IMR-90 (cell line): ENCODE measurements at regions of chrX and their contacts with region 1.

Region 1: DNA sequence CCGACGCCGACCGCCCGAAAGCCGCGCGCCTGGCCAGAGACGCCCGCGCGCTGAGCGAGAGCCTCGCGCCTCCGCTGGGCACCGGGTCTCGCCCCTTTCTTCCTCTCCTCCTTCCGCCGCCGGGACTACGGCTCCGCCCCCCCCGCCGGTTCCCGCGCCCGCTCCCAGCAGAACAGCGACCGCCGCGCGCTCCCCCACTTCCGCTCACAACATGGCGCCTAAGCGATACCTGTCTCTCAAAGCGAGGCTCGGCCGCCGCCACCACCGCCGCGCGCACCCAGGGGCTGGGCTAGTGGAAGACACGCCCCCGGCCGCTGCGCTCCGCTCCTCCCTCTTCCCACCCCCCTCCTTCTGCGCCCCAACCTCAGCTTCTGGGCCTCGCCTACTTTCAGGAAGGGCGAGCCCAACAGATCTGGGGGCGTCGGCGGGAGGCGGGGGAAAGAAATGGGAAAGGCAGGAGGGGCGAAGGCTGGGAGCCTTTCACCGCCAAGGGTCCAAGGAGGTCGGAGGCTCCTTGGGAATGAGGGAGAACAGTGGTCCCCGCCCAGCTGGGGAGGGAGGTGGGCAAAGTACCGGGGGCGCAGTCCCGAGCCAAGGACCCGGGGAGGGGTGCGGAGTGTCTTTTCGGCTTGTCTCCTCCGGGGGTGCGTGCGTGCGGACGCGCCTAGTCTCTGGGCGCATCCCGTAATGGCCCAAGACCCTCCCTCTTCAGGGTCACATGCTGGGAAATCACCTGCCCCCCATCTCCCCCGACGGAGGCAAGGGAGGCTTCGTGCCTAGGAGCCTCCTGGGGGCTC is at the start of gene RPS6KA3:
- DNase-seq: peak; percentile 79
- ATAC-seq: peak; percentile 90
- H3K4me3 ChIP-seq: peak within 1 kb of the TSS; percentile 95
- H3K27ac ChIP-seq: peak within 1 kb of the TSS; percentile 76
- H3K4me1 ChIP-seq: no peaks in the 10 kb centered on the region
- H3K27me3 ChIP-seq: no peaks in the 10 kb centered on the region
- CTCF ChIP-seq: no peak
- POLR2A ChIP-seq: peak; percentile 59
- RAD21 ChIP-seq: no peak
- total RNA-seq, gene RPS6KA3: 43.9 and 51.1 TPM in 2 replicates

Region 2: DNA sequence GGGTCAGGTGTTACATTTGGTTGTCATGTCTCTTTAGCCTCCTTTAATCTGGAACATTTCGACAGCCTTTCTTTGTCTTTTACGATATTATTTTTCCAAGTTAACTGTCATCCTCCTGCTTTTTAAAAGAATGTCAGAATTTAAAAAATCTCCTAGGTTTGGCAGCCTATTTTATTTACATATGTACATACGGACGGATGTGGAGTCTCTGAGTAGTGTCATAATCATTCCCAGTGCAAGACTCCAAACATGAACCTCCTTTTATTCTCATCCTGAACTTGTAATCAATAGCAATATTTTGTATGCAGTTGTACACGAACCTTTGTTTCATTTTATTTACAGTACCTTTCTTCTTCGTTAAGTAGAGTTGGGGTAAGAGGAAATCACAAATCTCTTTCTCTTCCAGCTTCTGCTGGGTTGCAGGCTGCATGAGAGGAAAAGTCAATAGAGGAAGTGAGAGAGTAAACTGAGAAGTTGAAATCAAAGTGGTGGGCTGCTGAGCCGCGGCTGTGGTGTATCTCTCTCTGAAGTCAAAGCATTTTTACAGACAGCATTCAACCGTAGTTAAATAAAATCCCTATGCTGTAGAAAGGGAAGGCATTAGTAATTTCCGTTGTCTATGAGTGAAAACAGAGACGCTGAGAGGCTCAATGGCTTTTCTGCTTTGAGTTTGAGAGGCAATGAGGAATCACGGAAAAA is 53.6 kb after region 1 on chrX:
- CTCF ChIA-PET with region 1: no interaction called
- POLR2A ChIA-PET with region 1: no interaction called
- dilution Hi-C with region 1: no loop called
- in situ Hi-C with region 1: no loop called
- intact Hi-C with region 1: no loop called
- DNase-seq: no peak
- ATAC-seq: 0 out of 2 replicates have a peak, but pooled peaks have one; percentile 32
- H3K4me3 ChIP-seq: peak overlapping the region; percentile 37; the same call in 1 of the 2 replicates
- H3K27ac ChIP-seq: peak overlapping the region; percentile 35; the same call in 1 of the 2 replicates
- H3K4me1 ChIP-seq: no peaks in the 10 kb centered on the region
- H3K27me3 ChIP-seq: peaks cover 11% of the 10 kb centered on the region
- CTCF ChIP-seq: no peak
- POLR2A ChIP-seq: no peak
- RAD21 ChIP-seq: no peak

Region 3: GRCh38 chrX:20361890-20362262 is 94.9 kb after region 1 on chrX:
- CTCF ChIA-PET with region 1: no interaction called
- POLR2A ChIA-PET with region 1: no interaction called
- dilution Hi-C with region 1: no loop called
- in situ Hi-C with region 1: no loop called
- intact Hi-C with region 1: loop called (anchors 1 kb)
- DNase-seq: peak; percentile 75
- ATAC-seq: peak; percentile 82
- H3K4me3 ChIP-seq: no peak overlapping the region
- H3K27ac ChIP-seq: peak overlapping the region; percentile 89; the same call in 1 of the 2 replicates
- H3K4me1 ChIP-seq: peaks cover 6% of the 10 kb centered on the region
- H3K27me3 ChIP-seq: no peaks in the 10 kb centered on the region
- CTCF ChIP-seq: no peak
- POLR2A ChIP-seq: no peak
- RAD21 ChIP-seq: no peak

Region 4: DNA sequence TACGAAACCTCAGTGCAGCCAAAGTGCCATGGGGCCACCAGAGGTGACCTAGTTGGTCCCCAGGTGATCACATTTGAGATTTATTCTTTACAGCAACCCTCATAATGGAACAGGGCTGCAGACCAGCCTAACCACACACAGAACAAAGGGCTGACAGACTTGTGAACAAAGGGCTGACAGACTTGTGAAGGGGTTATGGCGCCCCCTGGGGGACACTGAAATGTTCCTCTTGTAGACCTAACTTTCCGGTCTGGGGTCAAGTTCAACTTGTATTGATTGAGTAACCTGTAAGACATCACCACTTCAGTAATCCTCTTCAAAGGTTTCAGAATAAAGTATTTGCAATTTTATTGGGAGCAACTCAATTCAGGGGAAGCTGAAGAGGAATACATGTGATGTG is 175.6 kb after region 1 on chrX:
- CTCF ChIA-PET with region 1: interaction called, 4 read pairs
- POLR2A ChIA-PET with region 1: no interaction called
- dilution Hi-C with region 1: no loop called
- in situ Hi-C with region 1: no loop called
- intact Hi-C with region 1: loop called (anchors 1 kb)
- DNase-seq: peak; percentile 76
- ATAC-seq: peak; percentile 29; the same call in 1 of the 2 replicates
- H3K4me3 ChIP-seq: no peak overlapping the region
- H3K27ac ChIP-seq: no peak overlapping the region
- H3K4me1 ChIP-seq: no peaks in the 10 kb centered on the region
- H3K27me3 ChIP-seq: no peaks in the 10 kb centered on the region; the same call in 1 of the 2 replicates
- CTCF ChIP-seq: peak; percentile 60
- POLR2A ChIP-seq: no peak
- RAD21 ChIP-seq: peak; percentile 77

Region 5: GRCh38 chrX:20521245-20521644 is 254.2 kb after region 1 on chrX:
- CTCF ChIA-PET with region 1: no interaction called
- POLR2A ChIA-PET with region 1: no interaction called
- dilution Hi-C with region 1: no loop called
- in situ Hi-C with region 1: no loop called
- intact Hi-C with region 1: loop called (anchors 5 kb)
- DNase-seq: peak; percentile 74
- ATAC-seq: peak; percentile 38; the same call in 1 of the 2 replicates
- H3K4me3 ChIP-seq: no peak overlapping the region
- H3K27ac ChIP-seq: no peak overlapping the region
- H3K4me1 ChIP-seq: no peaks in the 10 kb centered on the region
- H3K27me3 ChIP-seq: no peaks in the 10 kb centered on the region; the same call in 1 of the 2 replicates
- CTCF ChIP-seq: no peak
- POLR2A ChIP-seq: no peak
- RAD21 ChIP-seq: no peak

Region 6: DNA sequence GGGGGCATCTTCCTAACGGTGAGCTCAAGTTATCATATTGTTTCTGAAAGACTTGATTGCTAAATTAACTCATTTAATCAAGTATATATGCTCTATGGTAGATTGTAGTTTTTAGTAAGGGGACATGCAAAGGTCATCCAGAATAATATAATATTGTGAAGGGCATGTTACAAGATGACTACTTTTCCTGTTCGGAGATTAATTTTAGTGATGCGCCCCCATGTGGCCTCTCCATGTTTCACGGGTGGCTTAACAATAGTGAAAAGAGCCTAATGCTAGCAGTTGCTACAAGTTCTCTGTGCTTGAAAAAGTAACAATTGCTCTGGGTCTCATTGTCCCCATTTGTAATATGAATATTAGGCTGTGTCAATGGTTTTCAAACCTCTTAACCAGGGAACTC is 1478.7 kb after region 1 on chrX:
- CTCF ChIA-PET with region 1: no interaction called
- POLR2A ChIA-PET with region 1: no interaction called
- dilution Hi-C with region 1: no loop called
- in situ Hi-C with region 1: loop called (anchors 25 kb)
- intact Hi-C with region 1: no loop called
- DNase-seq: peak; percentile 25
- ATAC-seq: peak; percentile 57
- H3K4me3 ChIP-seq: no peak overlapping the region
- H3K27ac ChIP-seq: no peak overlapping the region
- H3K4me1 ChIP-seq: no peaks in the 10 kb centered on the region
- H3K27me3 ChIP-seq: peaks cover 6% of the 10 kb centered on the region; the same call in 1 of the 2 replicates
- CTCF ChIP-seq: peak; percentile 49
- POLR2A ChIP-seq: no peak
- RAD21 ChIP-seq: peak; percentile 48